ENCODE measurements at regions of chr19 and their contacts with region 1.

Region 1: GRCh38 chr19:572140-572742 is at the start of gene BSG:
- DNase-seq: peak; percentile 98
- ATAC-seq: peak; percentile 82
- H3K4me3 Mint-ChIP-seq: peak within 1 kb of the TSS; percentile 97
- H3K27ac Mint-ChIP-seq: peak within 1 kb of the TSS; percentile 99
- H3K4me1 Mint-ChIP-seq: peaks cover 36% of the 10 kb centered on the region
- H3K27me3 Mint-ChIP-seq: no peaks in the 10 kb centered on the region
- CTCF ChIP-seq: no peak
- total RNA-seq, gene BSG: 150 and 152 TPM in 2 replicates

Region 2: DNA sequence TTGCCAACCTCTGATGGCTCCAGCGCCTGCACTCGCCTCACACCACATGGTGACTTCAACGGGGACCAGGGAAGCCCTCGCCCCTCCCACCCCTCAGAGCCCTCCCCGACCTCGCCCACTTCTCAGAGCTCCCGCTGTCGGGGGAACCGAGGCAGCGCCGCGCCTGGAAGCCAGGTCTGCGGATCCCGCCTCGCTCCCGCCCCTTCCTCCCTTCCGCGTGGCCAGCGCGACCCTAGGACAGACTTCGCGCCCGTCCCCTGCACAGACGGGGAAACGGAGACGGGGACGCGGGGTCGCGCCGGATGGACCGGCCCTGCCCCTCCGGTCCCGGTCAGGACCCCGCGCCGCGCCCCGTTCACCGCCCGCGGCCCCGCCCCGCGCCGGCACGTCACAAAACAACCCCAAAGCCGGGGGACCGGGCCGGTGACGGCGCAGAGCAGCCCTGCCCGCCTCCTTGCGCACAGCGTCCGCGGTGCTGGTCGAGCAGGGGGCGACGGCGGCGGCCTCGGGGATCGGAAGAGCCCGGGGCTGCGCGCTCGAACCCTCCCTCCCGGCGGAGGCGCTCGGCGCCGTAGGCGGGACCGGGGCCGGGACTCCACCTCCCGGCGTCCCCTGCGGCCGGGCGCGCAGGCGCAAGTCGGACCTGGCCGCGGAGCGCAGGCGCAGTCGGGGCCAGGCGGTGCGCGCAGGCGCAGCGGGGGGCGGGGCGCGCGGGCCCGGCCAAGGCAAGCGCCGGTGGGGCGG is 41.1 kb before region 1 on chr19:
- CTCF ChIA-PET with region 1: no interaction called
- POLR2A ChIA-PET with region 1: interaction called, 5 read pairs
- intact Hi-C with region 1: loop called (anchors 1 kb)
- DNase-seq: peak; percentile 99
- ATAC-seq: peak; percentile 81
- H3K4me3 Mint-ChIP-seq: peak overlapping the region; percentile 85
- H3K27ac Mint-ChIP-seq: peak overlapping the region; percentile 77
- H3K4me1 Mint-ChIP-seq: peaks cover 18% of the 10 kb centered on the region
- H3K27me3 Mint-ChIP-seq: peaks cover 1% of the 10 kb centered on the region
- CTCF ChIP-seq: no peak

Region 3: GRCh38 chr19:680287-681028 is 108.2 kb after region 1 on chr19:
- CTCF ChIA-PET with region 1: no interaction called
- POLR2A ChIA-PET with region 1: no interaction called
- intact Hi-C with region 1: loop called (anchors 1 kb)
- DNase-seq: peak; percentile 95
- ATAC-seq: peak; percentile 80
- H3K4me3 Mint-ChIP-seq: peak overlapping the region; percentile 95
- H3K27ac Mint-ChIP-seq: peak overlapping the region; percentile 98
- H3K4me1 Mint-ChIP-seq: peaks cover 14% of the 10 kb centered on the region
- H3K27me3 Mint-ChIP-seq: peaks cover 4% of the 10 kb centered on the region
- CTCF ChIP-seq: no peak